Activated CD4-positive, alpha-beta T cell treated with anti-CD3 and anti-CD28 coated beads, Interleukin-2, amount 10 ng/mL, durations not matched to agents 24 days and 14 days (primary cell): ENCODE measurements at regions of chr7 and their contacts with region 1.

Region 1: DNA sequence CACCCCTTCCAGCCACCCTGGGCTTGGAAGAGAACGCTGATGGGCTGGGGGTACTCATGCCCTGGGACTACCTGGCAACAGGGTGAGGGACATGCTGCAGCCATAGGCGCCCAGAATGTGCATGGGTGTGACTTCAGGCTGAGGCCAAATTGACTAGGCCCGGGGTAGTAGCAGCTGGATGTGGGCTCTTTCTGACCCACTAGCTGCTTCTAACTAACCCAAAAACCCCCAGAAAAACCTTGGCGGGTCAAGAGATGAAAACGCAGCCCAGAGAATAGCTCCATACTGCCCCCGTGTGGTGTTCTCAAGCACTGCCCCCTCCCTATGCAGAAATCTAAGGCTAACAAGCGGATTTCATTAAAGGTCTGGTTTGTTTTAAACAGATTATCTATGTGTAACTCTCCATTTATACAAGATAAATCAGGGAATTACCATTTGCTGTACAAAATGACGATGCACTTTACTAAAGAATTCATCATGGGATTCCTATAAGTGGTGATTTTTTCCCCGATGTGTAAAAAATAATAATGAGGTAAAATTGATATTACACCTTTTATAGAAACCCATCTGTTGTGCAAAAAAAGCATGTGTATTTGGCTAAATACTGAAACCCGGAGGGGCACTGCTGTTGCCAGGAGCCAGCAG is 4.2 kb downstream of the SMARCD3 start:
- DNase-seq: peak; percentile 89
- H3K4me3 Mint-ChIP-seq: peak overlapping the region; percentile 70
- H3K27ac Mint-ChIP-seq: no peak overlapping the region
- H3K4me1 Mint-ChIP-seq: peaks cover 34% of the 10 kb centered on the region
- H3K27me3 Mint-ChIP-seq: peaks cover 32% of the 10 kb centered on the region

Region 2: DNA sequence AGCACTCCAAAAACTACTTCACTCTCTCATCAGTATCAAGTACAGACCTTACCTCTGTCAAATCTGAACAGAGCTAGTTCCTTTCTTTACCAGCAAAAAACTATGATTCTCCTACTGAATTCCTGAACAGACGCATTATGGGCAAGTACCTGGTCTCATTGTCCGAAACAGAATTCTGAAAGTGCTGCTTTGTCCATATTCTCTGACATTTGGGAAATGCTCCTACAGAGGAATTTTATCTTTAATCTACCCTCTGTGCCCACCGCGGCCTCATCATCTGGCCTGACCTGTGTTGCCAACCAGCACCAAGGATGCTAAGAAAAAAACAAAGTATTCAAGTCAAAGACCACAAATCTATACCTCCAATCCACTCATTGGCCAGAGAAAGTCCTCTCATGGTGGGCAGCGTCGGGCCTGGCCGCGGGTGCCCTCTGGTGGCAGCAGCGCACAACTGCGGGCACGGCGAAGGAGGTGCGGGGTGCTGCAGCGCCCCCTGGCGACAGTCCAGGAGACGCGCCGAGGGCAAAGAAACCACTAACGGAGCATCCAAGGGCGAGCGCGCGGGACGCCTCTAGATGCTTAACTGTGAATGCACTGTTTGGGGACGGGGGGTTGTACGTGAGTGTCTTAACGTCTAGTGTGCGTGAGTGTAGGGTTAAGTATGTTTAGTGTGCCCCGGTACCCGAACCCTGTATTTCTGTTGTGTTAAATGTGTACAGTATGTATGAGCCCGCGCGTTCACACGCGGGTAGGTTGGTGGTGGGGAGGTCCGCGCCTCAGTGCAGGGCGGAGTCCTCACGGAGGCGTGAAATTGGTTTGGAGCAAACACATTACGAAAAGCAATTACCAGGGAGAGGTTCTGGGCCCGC is 71.8 kb before region 1 on chr7:
- intact Hi-C with region 1: loop called (anchors 2 kb)
- DNase-seq: peak; percentile 95
- H3K4me3 Mint-ChIP-seq: no peak overlapping the region
- H3K27ac Mint-ChIP-seq: peak overlapping the region; percentile 13
- H3K4me1 Mint-ChIP-seq: peaks cover 12% of the 10 kb centered on the region
- H3K27me3 Mint-ChIP-seq: peaks cover 54% of the 10 kb centered on the region

Region 3: GRCh38 chr7:151232091-151232916 is 12.0 kb before region 1 on chr7 and contains the start of gene CHPF2:
- intact Hi-C with region 1: loop called (anchors 1 kb)
- DNase-seq: peak; percentile 98
- H3K4me3 Mint-ChIP-seq: peak within 1 kb of the TSS; percentile 100
- H3K27ac Mint-ChIP-seq: peak within 1 kb of the TSS; percentile 99
- H3K4me1 Mint-ChIP-seq: peaks cover 33% of the 10 kb centered on the region
- H3K27me3 Mint-ChIP-seq: peaks cover 6% of the 10 kb centered on the region
- total RNA-seq, gene CHPF2: 42.0 and 46.4 TPM in 2 replicates

Region 4: DNA sequence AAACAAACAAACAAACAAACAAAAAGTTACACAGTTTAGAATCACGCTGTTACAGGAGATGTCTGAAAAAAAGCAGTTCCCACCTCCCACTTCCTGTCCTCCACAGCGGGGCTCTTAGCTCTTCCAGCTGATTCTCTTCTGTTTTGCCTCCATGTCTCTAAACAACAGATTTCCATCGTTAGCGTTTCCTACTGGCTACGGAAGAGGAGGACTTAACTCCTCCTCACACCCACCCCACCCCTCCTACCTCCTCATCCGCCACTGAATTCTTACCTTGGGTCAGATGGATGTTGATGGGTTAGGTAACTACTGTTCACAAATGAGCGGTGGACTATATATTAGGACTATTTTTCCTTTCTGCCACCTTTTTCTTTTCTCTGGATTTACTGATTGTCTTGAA is 60.5 kb after region 1 on chr7:
- intact Hi-C with region 1: loop called (anchors 1 kb)
- DNase-seq: no peak
- H3K4me3 Mint-ChIP-seq: peak overlapping the region; percentile 55
- H3K27ac Mint-ChIP-seq: no peak overlapping the region
- H3K4me1 Mint-ChIP-seq: peaks cover 16% of the 10 kb centered on the region
- H3K27me3 Mint-ChIP-seq: peaks cover 22% of the 10 kb centered on the region